ENCODE measurements at regions of chr2 and their contacts with region 1.

Region 1: DNA sequence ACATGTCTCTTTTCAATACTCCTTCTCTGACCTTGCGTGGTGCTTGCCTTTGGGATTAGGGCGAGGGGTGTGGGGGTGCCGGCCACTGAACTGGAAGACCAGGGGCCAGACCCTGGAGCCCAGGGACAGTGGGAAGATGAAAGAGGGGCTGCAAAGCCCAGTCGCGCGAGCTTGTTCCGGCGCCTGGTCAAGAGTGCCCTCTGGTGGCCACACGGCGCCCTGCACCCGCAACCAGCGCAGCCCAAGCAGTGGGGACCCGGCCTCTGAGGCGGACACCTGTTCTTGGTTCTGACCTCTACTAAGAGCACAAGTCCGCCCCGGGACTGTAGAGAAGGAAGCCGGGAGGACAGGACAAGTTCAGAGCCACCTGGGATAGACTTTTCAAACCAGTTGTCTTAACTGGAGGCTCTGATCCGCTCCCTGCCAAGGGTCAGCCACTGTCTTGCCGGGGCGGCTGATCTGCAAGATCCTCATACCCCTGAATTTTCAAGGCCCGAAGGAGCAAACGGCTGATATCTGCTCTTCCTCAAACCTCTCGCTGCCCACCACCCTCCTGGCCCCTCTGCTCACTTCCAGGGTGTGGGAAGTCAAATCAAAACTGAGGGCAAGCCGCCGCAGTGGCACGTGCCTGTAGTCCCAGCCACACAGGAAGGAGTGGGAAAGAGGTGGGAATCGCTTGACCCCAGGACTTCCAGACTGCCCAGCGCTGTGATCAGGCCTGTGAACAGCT is 14.9 kb upstream of the MSH6 start:
- DNase-seq: peak; percentile 83
- ATAC-seq: peak; percentile 85

Region 2: DNA sequence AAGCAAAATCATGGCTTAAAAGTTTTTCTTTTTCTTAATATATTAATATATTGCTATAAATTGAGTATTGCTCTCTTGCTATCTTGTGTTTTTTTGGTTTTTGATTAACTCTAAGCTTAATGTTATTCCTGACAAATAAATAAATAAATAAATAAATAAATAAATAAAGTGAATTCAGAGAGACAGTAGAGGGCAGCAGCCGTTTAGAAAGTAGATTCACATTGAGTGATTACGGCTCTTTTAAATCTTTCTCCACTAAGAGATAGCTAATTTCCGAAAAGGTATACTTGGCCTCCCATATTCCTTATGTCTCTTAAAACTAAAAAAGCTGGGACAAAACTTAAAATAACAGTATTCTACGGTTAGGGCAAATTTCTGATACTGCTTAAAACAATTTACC is 330.8 kb before region 1 on chr2:
- intact Hi-C with region 1: loop called (anchors 5 kb)
- DNase-seq: no peak
- ATAC-seq: peak; percentile 32

Region 3: DNA sequence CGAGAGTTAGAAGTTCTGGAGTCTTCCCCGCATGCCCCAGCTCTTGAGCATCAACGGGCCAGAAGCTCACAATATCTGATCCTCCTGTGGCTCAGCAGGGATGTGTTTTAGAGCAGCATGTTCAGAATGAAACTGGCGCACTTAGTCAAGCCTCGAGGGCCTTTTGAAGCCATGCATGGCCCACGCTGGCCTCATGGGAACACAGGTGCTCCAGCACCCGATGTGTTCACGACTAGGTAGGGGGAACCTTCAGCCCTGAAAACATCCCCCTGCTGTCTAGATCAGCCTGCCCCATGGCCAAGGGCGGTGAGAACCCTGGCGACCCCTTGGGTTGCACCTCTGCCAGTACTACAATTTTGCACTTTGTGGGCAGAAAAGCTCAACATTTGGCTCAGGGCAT is 47.7 kb after region 1 on chr2:
- intact Hi-C with region 1: no loop called
- DNase-seq: no peak
- ATAC-seq: no peak